ENCODE measurements at regions of chr17 and their contacts with region 1.

Region 1: DNA sequence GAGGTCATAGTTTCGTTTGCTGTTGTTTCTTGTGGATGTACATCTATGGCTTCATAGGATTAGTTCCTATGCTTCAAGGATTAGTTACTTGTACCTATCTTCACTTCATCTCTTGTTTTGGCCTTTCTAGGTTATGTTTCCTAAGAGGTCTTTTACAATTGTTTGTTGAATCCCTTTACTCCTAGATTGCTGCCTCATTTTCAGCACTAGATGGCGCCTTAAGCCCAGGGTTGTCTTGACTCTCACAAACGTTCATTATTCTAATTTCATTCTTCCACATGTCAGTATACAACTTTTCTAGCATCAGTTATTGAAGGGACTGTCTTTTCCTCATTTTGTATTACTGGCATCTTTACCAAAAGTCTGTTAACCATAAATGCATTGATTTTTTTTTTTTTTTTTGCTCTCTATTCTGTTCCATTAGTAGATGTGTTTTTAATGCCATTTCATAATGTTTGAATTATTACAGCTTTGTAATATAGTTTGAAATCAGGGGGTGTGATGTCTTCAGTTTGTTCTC is 45.0 kb upstream of the NACA2 start:
- DNase-seq: peak; percentile 65
- ATAC-seq: peak; percentile 80
- H3K4me3 ChIP-seq: no peak overlapping the region
- H3K27ac ChIP-seq: no peak overlapping the region
- H3K4me1 ChIP-seq: no peaks in the 10 kb centered on the region
- H3K27me3 ChIP-seq: no peaks in the 10 kb centered on the region
- CTCF ChIP-seq: peak; percentile 88 to 99 (median 89)
- POLR2A ChIP-seq: no peak
- RAD21 ChIP-seq: peak; percentile 96

Region 2: GRCh38 chr17:62219221-62219899 is 583.4 kb after region 1 on chr17:
- CTCF ChIA-PET with region 1: no interaction called
- POLR2A ChIA-PET with region 1: no interaction called
- RAD21 ChIA-PET with region 1: no interaction called
- intact Hi-C with region 1: loop called (anchors 10 kb)
- DNase-seq: no peak
- ATAC-seq: no peak
- H3K4me3 ChIP-seq: no peak overlapping the region
- H3K27ac ChIP-seq: no peak overlapping the region
- H3K4me1 ChIP-seq: no peaks in the 10 kb centered on the region
- H3K27me3 ChIP-seq: no peaks in the 10 kb centered on the region
- CTCF ChIP-seq: no peak
- POLR2A ChIP-seq: no peak
- RAD21 ChIP-seq: no peak

Measured in HCT116 (cell line).